ENCODE measurements at regions of chr12 and their contacts with region 1.

Region 1: GRCh38 chr12:47237751-47238211 is 158.0 kb upstream of the AMIGO2 start:
- DNase-seq: no peak
- ATAC-seq: peak; percentile 53
- H3K4me3 Mint-ChIP-seq: no peak overlapping the region
- H3K27ac Mint-ChIP-seq: peak overlapping the region; percentile 82
- H3K4me1 Mint-ChIP-seq: peaks cover 55% of the 10 kb centered on the region
- H3K27me3 Mint-ChIP-seq: no peaks in the 10 kb centered on the region
- CTCF ChIP-seq: no peak

Region 2: GRCh38 chr12:47216150-47216677 is 21.6 kb before region 1 on chr12:
- CTCF ChIA-PET with region 1: interaction called, 3 read pairs
- POLR2A ChIA-PET with region 1: interaction called, 11 read pairs
- intact Hi-C with region 1: no loop called
- DNase-seq: peak; percentile 87
- ATAC-seq: peak; percentile 52
- H3K4me3 Mint-ChIP-seq: peak overlapping the region; percentile 79
- H3K27ac Mint-ChIP-seq: peak overlapping the region; percentile 96
- H3K4me1 Mint-ChIP-seq: peaks cover 10% of the 10 kb centered on the region
- H3K27me3 Mint-ChIP-seq: no peaks in the 10 kb centered on the region
- CTCF ChIP-seq: no peak

Region 3: DNA sequence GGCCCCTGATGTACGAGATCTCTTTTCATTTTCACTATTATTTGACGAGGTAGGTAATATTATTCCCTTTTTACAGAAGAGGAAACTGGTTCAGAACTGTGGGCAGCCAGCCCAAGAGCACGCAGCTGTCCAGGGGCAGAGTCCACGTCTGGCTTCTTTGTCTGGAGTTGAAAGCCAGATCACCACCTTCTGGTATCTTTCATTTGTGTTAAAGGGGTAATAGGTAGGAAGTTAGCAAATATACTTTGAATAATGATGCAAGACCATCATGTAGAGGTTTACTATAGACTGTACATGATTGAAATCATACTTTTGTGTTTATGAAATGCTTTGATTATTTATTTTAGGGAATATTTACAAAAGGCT is 13.9 kb before region 1 on chr12:
- CTCF ChIA-PET with region 1: interaction called, 3 read pairs
- POLR2A ChIA-PET with region 1: interaction called, 10 read pairs
- intact Hi-C with region 1: no loop called
- DNase-seq: no peak
- ATAC-seq: no peak
- H3K4me3 Mint-ChIP-seq: peak overlapping the region; percentile 74
- H3K27ac Mint-ChIP-seq: peak overlapping the region; percentile 88
- H3K4me1 Mint-ChIP-seq: peaks cover 73% of the 10 kb centered on the region
- H3K27me3 Mint-ChIP-seq: no peaks in the 10 kb centered on the region
- CTCF ChIP-seq: no peak

Measured in activated CD8-positive, alpha-beta T cell treated with anti-CD3 and anti-CD28 coated beads for 36 hours (primary cell).